Posterior vena cava (tissue), 2 donors: ENCODE measurements at regions of chr1 and their contacts with region 1.

Region 1: DNA sequence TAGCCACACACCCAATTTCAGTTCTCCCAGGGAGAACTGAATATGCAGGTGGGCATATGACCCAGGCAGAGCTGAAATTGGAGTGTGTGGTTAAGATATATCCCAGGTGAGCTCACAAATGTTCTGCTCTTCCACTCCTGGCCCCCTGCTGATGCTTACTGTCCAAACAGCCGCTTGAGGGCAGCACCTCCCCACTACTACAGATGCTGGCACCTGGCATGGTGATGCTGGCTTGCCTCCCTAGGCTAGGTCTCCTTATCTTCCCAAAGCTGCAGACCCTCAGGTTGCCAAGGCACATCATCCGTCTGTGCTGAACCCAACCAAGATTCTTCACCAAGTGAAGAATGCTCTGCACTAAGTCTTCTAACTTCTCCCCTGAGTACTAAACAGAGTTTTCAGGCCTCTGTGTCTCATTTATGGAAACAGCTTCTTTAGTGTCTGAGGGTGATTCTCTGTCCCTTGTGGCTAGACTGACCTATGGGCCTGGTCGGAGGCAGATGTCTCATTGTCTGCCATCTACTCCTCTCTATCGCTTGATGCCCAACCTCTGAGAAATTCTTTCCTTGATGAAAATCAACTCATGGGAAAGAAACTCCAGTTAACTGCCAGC is 27.2 kb downstream of the XCL1 start:
- DNase-seq: peak; percentile 90

Region 2: GRCh38 chr1:169133801-169134502 is 530.3 kb after region 1 on chr1:
- intact Hi-C with region 1: loop called in 1 of 2 experiments (anchors 10 kb)
- DNase-seq: no peak

Region 3: DNA sequence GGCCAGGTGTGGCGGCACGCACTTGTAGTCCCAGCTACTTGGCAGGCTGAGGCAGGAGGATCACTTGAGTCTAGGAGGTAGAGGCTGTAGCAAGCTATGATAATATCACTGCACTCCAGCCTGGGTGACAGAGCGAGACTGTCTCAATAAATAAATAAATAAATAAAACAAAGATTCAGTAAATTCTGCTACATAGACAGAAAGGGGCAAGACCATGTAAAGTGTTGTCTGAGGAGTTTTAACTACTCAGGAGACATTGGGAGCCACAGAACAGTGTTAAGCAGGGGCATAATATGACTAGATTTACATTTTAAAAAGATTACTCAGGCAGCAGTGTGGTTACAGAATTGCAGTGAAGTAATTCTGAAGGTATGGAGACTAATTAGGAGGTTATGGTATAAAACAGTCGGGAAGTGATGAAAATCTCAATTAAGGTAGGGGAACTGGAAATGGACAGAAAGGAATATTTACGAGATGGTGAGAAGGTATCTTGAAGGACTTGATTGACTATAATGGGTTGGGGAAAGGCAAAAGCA is 597.5 kb after region 1 on chr1:
- intact Hi-C with region 1: loop called in 1 of 2 experiments (anchors 10 kb)
- DNase-seq: no peak

Region 4: DNA sequence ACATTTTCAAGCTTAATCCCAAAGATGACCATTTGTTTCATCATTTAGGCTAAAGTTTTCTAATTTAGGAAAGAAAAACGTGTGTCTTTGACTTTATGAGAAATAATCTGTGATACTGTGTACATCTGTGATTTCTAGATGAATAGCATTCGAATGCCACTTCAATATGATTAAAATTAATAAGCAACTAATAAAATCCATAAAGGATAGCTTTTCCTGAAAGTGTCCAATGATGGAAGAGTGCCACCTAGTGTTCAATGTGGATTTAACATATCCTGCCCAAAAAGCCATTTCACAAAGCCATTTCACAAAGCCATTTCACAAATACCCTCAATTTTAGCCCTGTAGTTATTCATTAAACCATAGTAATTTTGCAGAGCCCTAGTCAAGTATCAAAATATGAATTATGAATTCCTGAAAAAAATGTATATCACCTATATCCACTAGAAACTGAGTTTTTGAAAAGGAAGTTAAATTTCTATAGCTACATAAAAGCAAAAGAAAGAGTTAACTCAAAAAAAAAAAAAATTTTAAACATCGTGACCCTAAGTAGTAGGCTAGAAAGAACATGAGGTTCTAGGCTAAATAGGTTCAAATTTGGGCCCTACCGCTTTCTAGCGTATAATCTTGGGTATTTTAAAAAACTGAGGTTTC is 744.9 kb after region 1 on chr1:
- intact Hi-C with region 1: loop called (anchors 5 to 10 kb)
- DNase-seq: no peak